ENCODE measurements at regions of chr20 and their contacts with region 1.

Region 1: DNA sequence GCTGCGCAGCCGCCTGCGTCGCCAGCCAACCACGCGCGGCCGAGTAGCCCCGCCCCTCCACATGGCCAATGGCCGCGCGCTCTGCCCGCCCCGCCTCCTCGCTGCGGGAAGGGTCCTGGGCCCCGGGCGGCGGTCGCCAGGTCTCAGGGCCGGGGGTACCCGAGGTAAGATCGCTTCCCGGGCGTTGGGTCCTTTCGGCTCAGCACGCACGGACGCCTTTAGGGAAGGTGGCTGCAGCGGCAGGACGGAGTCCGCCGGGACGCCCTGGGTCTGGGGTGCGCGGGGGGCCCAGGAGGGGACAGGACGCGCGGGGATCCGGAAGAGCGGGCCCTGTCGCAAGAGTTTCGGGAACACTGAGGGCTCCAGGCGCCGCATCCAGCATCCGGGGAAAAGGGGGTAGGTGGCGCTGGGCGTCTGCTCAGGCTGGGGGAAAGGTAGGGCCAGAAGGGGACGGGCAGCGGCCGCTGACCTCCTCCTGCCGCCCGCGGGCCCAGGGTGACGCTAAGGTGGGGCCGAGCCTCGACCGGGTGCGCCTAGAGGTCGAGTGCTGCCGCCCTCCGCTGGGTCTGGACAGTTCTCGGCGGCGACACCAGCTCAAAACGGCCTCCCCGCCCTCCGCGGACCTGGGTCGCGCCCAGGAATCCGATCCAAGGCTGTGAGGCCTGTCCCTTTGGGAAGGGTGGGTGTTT is at the start of gene MAVS:
- DNase-seq: peak; percentile 96
- ATAC-seq: peak; percentile 98
- total RNA-seq, gene MAVS: 35.0 TPM

Region 2: GRCh38 chr20:3786665-3787323 is 60.1 kb before region 1 on chr20 and contains the start of gene CENPB:
- intact Hi-C with region 1: loop called (anchors 1 kb)
- DNase-seq: peak; percentile 93
- ATAC-seq: peak; percentile 96
- total RNA-seq, gene CENPB: 68.2 TPM